GM23248 (cell line): ENCODE measurements at regions of chr3 and their contacts with region 1.

Region 1: GRCh38 chr3:99833617-99834205 is 16.0 kb downstream of the CMSS1 start:
- DNase-seq: no peak
- H3K4me3 ChIP-seq: no peak overlapping the region
- H3K27ac ChIP-seq: no peak overlapping the region
- H3K4me1 ChIP-seq: peaks cover 9% of the 10 kb centered on the region; the same call in 1 of the 2 replicates
- H3K27me3 ChIP-seq: no peaks in the 10 kb centered on the region

Region 2: DNA sequence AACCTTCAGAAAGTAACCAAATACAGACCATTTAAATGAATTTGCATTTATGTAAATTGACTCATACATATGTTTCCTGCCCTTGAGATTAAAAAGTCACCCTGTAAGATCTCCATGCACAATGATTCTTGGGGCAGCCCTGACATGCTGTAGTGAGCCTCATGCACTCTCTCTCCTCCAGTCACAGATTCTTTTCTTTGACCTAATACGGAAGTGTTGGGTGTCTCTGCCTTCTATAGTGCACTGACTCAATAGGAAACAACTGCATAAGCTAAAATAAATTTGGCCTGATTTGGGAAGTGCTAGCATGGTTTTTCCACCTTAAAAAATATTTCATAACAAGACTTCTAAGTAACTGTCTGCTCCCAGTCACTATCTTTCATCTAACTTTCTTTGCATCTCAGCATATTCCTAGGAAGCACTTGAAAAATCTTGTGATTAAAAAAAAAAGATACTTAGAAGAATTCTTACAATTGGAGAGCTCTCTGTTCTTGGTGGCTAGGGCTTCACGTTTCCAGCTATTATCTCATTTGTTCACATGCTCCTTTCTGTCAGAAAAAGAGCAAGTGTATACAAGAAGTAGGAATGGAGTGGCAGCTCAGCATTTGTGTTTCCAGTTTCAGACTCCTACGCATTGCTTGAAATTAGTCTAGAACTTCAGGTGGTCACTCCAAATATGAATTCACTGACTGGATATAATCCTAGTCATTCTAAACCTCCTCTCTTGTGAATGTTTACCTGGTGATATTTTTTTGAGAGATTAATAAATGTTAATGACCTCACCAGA is 403.2 kb before region 1 on chr3:
- in situ Hi-C with region 1: no loop called
- DNase-seq: peak; percentile 47
- H3K4me3 ChIP-seq: no peak overlapping the region
- H3K27ac ChIP-seq: no peak overlapping the region
- H3K4me1 ChIP-seq: peaks cover 17% of the 10 kb centered on the region
- H3K27me3 ChIP-seq: no peaks in the 10 kb centered on the region

Region 3: GRCh38 chr3:100245927-100246326 is 412.2 kb after region 1 on chr3:
- in situ Hi-C with region 1: loop called (anchors 5 kb)
- DNase-seq: peak; percentile 82
- H3K4me3 ChIP-seq: no peak overlapping the region
- H3K27ac ChIP-seq: no peak overlapping the region
- H3K4me1 ChIP-seq: peaks cover 21% of the 10 kb centered on the region
- H3K27me3 ChIP-seq: no peaks in the 10 kb centered on the region

Region 4: GRCh38 chr3:100581650-100582049 is 747.9 kb after region 1 on chr3:
- in situ Hi-C with region 1: loop called (anchors 10 kb)
- DNase-seq: no peak
- H3K4me3 ChIP-seq: no peak overlapping the region
- H3K27ac ChIP-seq: no peak overlapping the region
- H3K4me1 ChIP-seq: peaks cover 5% of the 10 kb centered on the region; the same call in 1 of the 2 replicates
- H3K27me3 ChIP-seq: no peaks in the 10 kb centered on the region